ENCODE measurements at regions of chr7 and their contacts with region 1.

Region 1: GRCh38 chr7:1940402-1940786 is 270.3 kb downstream of the ELFN1 start:
- DNase-seq: peak; percentile 95
- H3K4me3 Mint-ChIP-seq: peak overlapping the region; percentile 87
- H3K27ac Mint-ChIP-seq: peak overlapping the region; percentile 90
- H3K4me1 Mint-ChIP-seq: peaks cover 59% of the 10 kb centered on the region
- H3K27me3 Mint-ChIP-seq: no peaks in the 10 kb centered on the region

Region 2: GRCh38 chr7:1733206-1733907 is 207.0 kb before region 1 on chr7:
- CTCF ChIA-PET with region 1: no interaction called
- intact Hi-C with region 1: no loop called
- DNase-seq: no peak
- H3K4me3 Mint-ChIP-seq: no peak overlapping the region
- H3K27ac Mint-ChIP-seq: no peak overlapping the region
- H3K4me1 Mint-ChIP-seq: peaks cover 3% of the 10 kb centered on the region
- H3K27me3 Mint-ChIP-seq: no peaks in the 10 kb centered on the region

Region 3: GRCh38 chr7:1925349-1925748 is 15.0 kb before region 1 on chr7:
- CTCF ChIA-PET with region 1: interaction called, 3 read pairs
- intact Hi-C with region 1: loop called (anchors 1 kb)
- DNase-seq: peak; percentile 37
- H3K4me3 Mint-ChIP-seq: no peak overlapping the region
- H3K27ac Mint-ChIP-seq: no peak overlapping the region
- H3K4me1 Mint-ChIP-seq: peaks cover 75% of the 10 kb centered on the region
- H3K27me3 Mint-ChIP-seq: peaks cover 6% of the 10 kb centered on the region

Region 4: GRCh38 chr7:1961701-1962276 is 21.4 kb after region 1 on chr7:
- CTCF ChIA-PET with region 1: no interaction called
- intact Hi-C with region 1: loop called (anchors 1 kb)
- DNase-seq: peak; percentile 76
- H3K4me3 Mint-ChIP-seq: no peak overlapping the region
- H3K27ac Mint-ChIP-seq: peak overlapping the region; percentile 88
- H3K4me1 Mint-ChIP-seq: peaks cover 9% of the 10 kb centered on the region
- H3K27me3 Mint-ChIP-seq: no peaks in the 10 kb centered on the region

Region 5: GRCh38 chr7:1979591-1980560 is 39.5 kb after region 1 on chr7:
- CTCF ChIA-PET with region 1: no interaction called
- intact Hi-C with region 1: no loop called
- DNase-seq: no peak
- H3K4me3 Mint-ChIP-seq: no peak overlapping the region
- H3K27ac Mint-ChIP-seq: no peak overlapping the region
- H3K4me1 Mint-ChIP-seq: peaks cover 8% of the 10 kb centered on the region
- H3K27me3 Mint-ChIP-seq: no peaks in the 10 kb centered on the region

Region 6: DNA sequence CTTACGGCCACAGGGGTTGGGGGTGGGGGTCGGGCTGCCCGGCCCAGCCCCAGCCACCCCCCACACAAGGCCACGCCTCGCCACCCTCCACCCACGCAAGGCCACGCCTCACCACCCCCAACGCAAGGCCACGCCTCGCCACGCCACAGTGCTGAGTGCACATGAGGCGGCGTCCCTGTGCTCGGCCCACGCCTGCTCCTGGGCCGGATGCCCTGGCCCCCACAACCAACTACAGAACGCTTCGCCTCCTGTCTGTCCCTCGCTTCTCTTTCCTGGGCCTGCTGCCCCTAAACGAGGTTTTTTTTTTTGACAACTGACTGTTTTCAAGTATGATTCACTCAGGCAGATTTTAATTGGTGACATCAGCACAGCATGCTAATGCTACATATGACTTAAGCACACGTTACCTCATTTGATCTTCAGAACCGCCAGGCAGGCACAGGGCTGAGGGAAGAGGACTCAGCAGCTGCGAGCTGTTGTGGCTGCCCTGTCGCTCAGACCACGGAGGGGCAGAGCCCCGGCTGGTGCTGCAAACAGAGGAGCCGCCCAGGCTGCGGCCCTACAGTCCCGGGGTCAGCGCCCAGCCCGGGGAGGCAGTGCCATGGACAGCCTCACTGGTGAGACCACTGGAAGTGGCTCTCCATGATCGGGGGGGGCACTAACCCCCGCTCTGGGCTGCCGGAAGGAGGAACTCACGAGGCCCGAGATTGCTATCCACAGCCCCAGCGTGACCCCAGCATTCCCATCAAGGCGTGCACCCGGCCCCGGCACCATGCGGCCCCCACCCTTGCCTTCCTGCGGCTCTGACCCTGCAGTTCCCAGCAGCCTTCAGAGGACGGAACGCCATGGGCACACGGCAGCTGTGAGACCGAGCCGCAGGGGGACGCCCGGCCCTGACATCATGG is 79.5 kb after region 1 on chr7:
- CTCF ChIA-PET with region 1: no interaction called
- intact Hi-C with region 1: loop called (anchors 5 kb)
- DNase-seq: peak; percentile 58
- H3K4me3 Mint-ChIP-seq: peak overlapping the region; percentile 24
- H3K27ac Mint-ChIP-seq: peak overlapping the region; percentile 61
- H3K4me1 Mint-ChIP-seq: peaks cover 28% of the 10 kb centered on the region
- H3K27me3 Mint-ChIP-seq: no peaks in the 10 kb centered on the region

Region 7: GRCh38 chr7:2037808-2038522 is 97.6 kb after region 1 on chr7:
- CTCF ChIA-PET with region 1: no interaction called
- intact Hi-C with region 1: loop called (anchors 1 kb)
- DNase-seq: peak; percentile 40
- H3K4me3 Mint-ChIP-seq: peak overlapping the region; percentile 74
- H3K27ac Mint-ChIP-seq: peak overlapping the region; percentile 78
- H3K4me1 Mint-ChIP-seq: peaks cover 52% of the 10 kb centered on the region
- H3K27me3 Mint-ChIP-seq: no peaks in the 10 kb centered on the region

Region 8: GRCh38 chr7:2281541-2281940 is 341.1 kb after region 1 on chr7:
- CTCF ChIA-PET with region 1: no interaction called
- intact Hi-C with region 1: no loop called
- DNase-seq: no peak
- H3K4me3 Mint-ChIP-seq: no peak overlapping the region
- H3K27ac Mint-ChIP-seq: no peak overlapping the region
- H3K4me1 Mint-ChIP-seq: peaks cover 3% of the 10 kb centered on the region
- H3K27me3 Mint-ChIP-seq: no peaks in the 10 kb centered on the region

Region 9: GRCh38 chr7:2738766-2739549 is 798.6 kb after region 1 on chr7:
- CTCF ChIA-PET with region 1: no interaction called
- intact Hi-C with region 1: no loop called
- DNase-seq: no peak
- H3K4me3 Mint-ChIP-seq: no peak overlapping the region
- H3K27ac Mint-ChIP-seq: no peak overlapping the region
- H3K4me1 Mint-ChIP-seq: peaks cover 21% of the 10 kb centered on the region
- H3K27me3 Mint-ChIP-seq: no peaks in the 10 kb centered on the region

Measured in activated naive CD4-positive, alpha-beta T cell treated with anti-CD3 and anti-CD28 coated beads for 36 hours (primary cell).